Left ventricle myocardium inferior (tissue), 1 donor: ENCODE measurements at regions of chr13 and their contacts with region 1.

Region 1: GRCh38 chr13:98445340-98446233 is 131.3 kb downstream of the STK24 start:
- DNase-seq: peak; percentile 72
- H3K4me3 ChIP-seq: no peak overlapping the region
- H3K27ac ChIP-seq: peak overlapping the region; percentile 19
- H3K4me1 ChIP-seq: peaks cover 39% of the 10 kb centered on the region
- H3K27me3 ChIP-seq: no peaks in the 10 kb centered on the region
- CTCF ChIP-seq: peak; percentile 98

Region 2: DNA sequence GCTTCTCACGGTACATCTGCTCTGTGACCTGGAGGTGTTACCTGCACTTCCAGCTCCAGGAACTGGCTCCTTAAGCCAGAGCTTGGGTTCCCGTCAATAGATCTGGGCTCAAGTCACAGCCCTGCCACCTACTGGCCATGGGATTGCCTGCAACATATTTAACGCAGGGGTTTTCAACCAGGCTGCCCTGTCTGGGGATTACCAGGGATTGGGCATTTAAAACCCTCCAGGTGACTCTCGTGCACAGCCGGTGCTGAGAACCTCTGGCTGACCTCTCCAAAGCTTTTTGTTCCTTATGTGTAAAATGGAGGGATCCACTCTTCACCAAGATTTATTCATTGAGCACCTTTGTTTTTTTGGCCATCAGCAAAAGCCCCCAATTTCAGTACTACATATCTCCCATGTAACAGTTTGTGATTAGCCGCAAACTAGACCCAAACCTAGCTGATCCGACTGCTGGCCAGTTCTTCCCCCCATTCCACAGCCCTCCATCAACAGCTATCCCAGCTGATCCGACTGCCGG is 207.9 kb after region 1 on chr13:
- intact Hi-C with region 1: loop called (anchors 5 kb)
- DNase-seq: peak; percentile 71
- H3K4me3 ChIP-seq: no peak overlapping the region
- H3K27ac ChIP-seq: no peak overlapping the region
- H3K4me1 ChIP-seq: peaks cover 7% of the 10 kb centered on the region
- H3K27me3 ChIP-seq: no peaks in the 10 kb centered on the region
- CTCF ChIP-seq: peak; percentile 91

Region 3: DNA sequence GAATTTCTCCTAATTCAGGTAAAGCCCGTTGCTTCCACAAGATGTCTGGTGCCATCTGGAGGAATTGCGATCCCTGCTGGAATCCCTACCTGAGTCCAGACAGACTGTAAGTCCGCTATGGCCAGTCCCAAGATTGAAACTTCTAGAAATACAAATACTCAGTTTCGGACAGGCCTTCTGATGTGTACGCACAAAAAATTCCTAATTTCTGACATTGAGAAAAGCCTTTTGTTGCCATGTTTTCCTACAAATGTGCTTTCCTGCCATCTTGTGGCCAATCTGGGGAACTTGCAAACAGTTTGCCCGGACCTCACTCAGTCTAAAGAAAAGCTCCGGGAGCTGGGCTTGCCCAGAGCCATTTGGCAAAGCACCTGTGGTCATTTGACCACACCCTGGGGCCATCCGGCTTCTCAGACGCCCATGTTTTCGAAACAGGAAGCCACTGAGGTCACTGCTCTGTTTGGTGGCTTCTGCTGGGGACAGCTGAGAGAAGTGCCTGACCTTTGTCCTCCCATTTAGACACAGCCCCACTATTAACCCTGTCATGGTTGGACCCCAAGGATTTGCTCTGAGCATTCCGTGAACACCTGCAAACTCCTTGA is 227.5 kb after region 1 on chr13:
- intact Hi-C with region 1: loop called (anchors 5 kb)
- DNase-seq: peak; percentile 44
- H3K4me3 ChIP-seq: no peak overlapping the region
- H3K27ac ChIP-seq: no peak overlapping the region
- H3K4me1 ChIP-seq: peaks cover 11% of the 10 kb centered on the region
- H3K27me3 ChIP-seq: no peaks in the 10 kb centered on the region
- CTCF ChIP-seq: peak; percentile 91